Mammary epithelial cell (primary cell): ENCODE measurements at regions of chr17 and their contacts with region 1.

Region 1: GRCh38 chr17:63600569-63601438 is at the start of gene TACO1:
- DNase-seq: peak; percentile 73
- H3K4me3 ChIP-seq: peak within 1 kb of the TSS; percentile 55 to 97 (median 78)
- H3K27ac ChIP-seq: peak within 1 kb of the TSS; percentile 55
- H3K4me1 ChIP-seq: peaks cover 7% of the 10 kb centered on the region
- H3K27me3 ChIP-seq: no peaks in the 10 kb centered on the region
- CTCF ChIP-seq: no peak
- total RNA-seq, gene TACO1: 14.5 to 28.7 TPM

Region 2: GRCh38 chr17:63008114-63008513 is 592.7 kb before region 1 on chr17:
- CTCF ChIA-PET with region 1: no interaction called
- dilution Hi-C with region 1: no loop called
- in situ Hi-C with region 1: no loop called
- intact Hi-C with region 1: no loop called
- DNase-seq: no peak
- H3K4me3 ChIP-seq: no peak overlapping the region
- H3K27ac ChIP-seq: no peak overlapping the region
- H3K4me1 ChIP-seq: no peaks in the 10 kb centered on the region
- H3K27me3 ChIP-seq: no peaks in the 10 kb centered on the region
- CTCF ChIP-seq: no peak

Region 3: DNA sequence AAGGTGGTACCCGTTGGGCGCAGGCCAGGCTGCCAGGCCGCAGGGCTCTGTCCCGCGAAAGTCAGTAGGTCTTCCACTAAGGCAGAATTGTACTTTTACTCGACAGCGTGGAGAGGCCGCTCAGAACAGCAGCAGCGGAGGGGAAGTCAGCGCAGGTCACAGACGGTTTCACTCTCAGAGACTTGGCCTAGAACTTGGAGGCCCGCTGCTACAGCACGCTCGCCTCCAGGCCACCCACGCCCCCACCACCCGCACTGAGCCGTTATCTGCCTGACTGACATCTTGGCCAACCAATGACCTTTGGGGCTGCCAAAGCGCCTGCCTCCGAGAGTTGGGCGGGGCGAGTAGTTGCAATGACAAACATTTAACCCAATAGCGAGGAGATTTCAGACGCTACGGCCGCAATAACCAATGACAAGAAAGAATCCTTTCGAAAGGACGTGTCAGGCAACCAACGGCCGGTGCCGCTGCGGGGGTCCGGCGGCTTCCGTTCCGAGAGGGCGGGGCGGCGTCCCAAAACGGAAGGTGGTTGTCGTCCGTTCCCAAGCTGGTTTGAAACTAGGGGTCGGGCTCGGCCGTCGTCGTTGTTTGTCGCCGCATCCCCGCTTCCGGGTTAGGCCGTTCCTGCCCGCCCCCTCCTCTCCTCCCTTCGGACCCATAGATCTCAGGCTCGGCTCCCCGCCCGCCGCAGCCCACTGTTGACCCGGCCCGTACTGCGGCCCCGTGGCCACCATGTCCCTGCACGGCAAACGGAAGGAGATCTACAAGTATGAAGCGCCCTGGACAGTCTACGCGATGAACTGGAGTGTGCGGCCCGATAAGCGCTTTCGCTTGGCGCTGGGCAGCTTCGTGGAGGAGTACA is 50.6 kb before region 1 on chr17 and contains the start of gene DCAF7:
- CTCF ChIA-PET with region 1: no interaction called
- dilution Hi-C with region 1: no loop called
- in situ Hi-C with region 1: no loop called
- intact Hi-C with region 1: loop called (anchors 2 kb)
- DNase-seq: peak; percentile 100
- H3K4me3 ChIP-seq: peak within 1 kb of the TSS; percentile 86 to 98 (median 95)
- H3K27ac ChIP-seq: peak within 1 kb of the TSS; percentile 70
- H3K4me1 ChIP-seq: peaks cover 27% of the 10 kb centered on the region
- H3K27me3 ChIP-seq: no peaks in the 10 kb centered on the region
- CTCF ChIP-seq: no peak
- total RNA-seq, gene DCAF7: 47.5 to 71.3 TPM